ENCODE measurements at regions of chr3 and their contacts with region 1.

Region 1: GRCh38 chr3:77039606-77040171 is at the start of gene ROBO2:
- DNase-seq: peak; percentile 6 to 12
- H3K4me3 ChIP-seq: peak within 1 kb of the TSS in 1 of 3 donors; percentile 13
- H3K27ac ChIP-seq: no peak within 1 kb of the TSS
- H3K4me1 ChIP-seq: peaks cover 12 to 15% of the 10 kb centered on the region in 2 donors
- H3K27me3 ChIP-seq: peaks cover 21% of the 10 kb centered on the region
- CTCF ChIP-seq: no peak
- POLR2A ChIP-seq: no peak
- total RNA-seq, gene ROBO2: 0.56 to 1.5 TPM in 2 of 4 donors, not detected in the others

Region 2: DNA sequence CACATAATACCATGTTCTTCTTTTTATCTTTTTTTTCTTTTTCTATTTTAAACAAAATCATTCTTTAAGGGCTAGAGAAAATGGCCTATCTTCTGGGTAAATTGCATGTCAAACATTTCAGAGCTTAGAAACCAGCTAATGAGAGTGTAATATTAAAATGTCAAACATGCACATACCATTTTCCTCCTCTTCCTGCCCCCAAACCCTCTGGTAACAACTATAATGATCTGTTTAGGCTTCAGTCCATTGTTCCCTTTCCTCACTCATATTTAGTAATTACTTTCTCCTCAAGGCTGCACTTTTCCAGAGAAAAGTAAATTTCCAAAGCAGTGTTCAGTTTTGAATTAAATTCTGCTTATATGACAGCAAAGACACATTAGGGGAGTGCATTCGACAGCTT is 224.1 kb before region 1 on chr3:
- intact Hi-C with region 1: no loop called
- DNase-seq: no peak
- H3K4me3 ChIP-seq: no peak overlapping the region
- H3K27ac ChIP-seq: no peak overlapping the region
- H3K4me1 ChIP-seq: no peaks in the 10 kb centered on the region
- H3K27me3 ChIP-seq: no peaks in the 10 kb centered on the region
- CTCF ChIP-seq: no peak
- POLR2A ChIP-seq: no peak

Region 3: DNA sequence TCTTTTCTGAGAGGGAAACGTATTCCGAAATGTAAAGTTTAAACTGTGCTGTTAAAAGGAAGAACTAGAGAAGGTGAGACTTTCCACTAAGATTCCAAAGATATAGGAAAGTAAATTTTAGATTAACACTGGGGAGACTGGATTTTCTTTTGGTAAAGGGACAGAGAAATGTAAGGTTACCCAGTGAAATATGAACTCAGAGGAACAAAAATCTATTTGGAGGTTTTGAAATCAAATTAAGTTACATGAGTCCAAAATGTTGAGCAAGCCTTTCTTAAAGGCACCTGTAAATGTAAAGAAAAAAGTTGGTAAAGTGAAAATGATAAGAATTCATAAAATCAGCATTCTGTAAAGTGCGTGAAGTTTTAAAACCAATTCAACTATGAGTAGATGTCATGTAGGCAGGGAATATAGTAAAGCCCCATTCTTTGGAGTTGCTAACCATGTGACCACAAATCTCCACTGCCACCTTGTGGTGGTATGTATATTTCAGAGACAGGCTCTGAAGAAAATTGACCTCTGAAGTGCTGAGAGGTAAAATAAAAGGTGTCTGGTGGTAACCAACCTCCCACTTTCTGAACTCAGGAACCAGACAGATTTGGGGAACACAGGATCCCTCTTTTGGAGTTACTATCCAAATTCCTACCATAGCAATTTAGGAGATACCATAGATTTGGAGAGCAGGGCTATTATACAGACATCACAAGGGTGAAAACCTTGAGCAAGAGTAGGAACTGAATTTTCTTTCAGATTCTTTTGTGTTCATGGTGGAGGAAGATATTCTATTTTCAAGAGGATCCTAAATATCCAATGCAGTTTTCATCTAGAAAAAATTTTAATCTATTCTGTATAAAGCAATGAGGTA is 215.5 kb after region 1 on chr3:
- intact Hi-C with region 1: loop called (anchors 5 kb)
- DNase-seq: peak; percentile 25 to 27
- H3K4me3 ChIP-seq: no peak overlapping the region
- H3K27ac ChIP-seq: no peak overlapping the region
- H3K4me1 ChIP-seq: no peaks in the 10 kb centered on the region
- H3K27me3 ChIP-seq: no peaks in the 10 kb centered on the region
- CTCF ChIP-seq: peak; percentile 18 to 61 (median 46)
- POLR2A ChIP-seq: no peak

Region 4: GRCh38 chr3:77588863-77589262 is 549.2 kb after region 1 on chr3:
- intact Hi-C with region 1: no loop called
- DNase-seq: no peak
- H3K4me3 ChIP-seq: no peak overlapping the region
- H3K27ac ChIP-seq: no peak overlapping the region
- H3K4me1 ChIP-seq: no peaks in the 10 kb centered on the region
- H3K27me3 ChIP-seq: no peaks in the 10 kb centered on the region
- CTCF ChIP-seq: no peak
- POLR2A ChIP-seq: no peak